BJ (cell line): ENCODE measurements at regions of chr19 and their contacts with region 1.

Region 1: DNA sequence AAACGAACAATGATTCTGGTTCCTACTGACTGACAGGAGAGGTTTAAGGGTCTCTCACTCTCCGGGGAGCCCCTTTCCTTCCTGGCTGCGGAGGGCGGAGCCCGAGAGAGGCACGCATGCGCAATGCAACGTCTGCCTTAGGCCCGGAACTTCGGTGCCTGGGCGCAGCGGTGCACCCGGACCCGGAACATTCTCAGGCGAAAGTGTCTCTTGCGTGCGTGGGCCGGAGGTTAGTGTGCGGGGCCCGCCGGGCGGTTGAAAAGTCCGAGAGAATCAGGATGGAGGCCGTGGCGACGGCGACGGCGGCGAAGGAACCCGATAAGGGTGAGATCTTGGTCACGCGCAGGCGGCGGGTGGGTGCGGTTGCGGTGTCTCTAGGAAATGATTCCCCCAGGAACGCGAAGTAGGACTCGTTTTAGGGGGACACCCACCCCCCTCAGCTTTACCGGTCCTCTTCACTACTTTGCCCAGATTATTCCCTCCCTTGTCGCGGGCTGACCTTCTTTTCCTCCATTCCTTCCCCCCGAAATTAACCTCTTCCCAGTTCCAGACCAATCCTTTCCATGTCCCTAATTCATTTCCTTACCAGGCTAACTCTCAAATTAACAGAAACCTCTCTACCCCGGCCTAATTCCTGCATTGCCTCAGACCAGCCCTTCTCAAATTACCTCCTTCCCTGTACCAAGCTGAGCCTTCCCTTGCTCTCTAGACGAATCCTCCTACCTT is at the start of gene CCDC97:
- DNase-seq: no peak
- H3K4me3 ChIP-seq: peak within 1 kb of the TSS; percentile 48
- H3K27me3 ChIP-seq: no peaks in the 10 kb centered on the region
- CTCF ChIP-seq: no peak
- polyA plus RNA-seq, gene CCDC97: 7.2 and 10.3 TPM in 2 replicates

Region 2: DNA sequence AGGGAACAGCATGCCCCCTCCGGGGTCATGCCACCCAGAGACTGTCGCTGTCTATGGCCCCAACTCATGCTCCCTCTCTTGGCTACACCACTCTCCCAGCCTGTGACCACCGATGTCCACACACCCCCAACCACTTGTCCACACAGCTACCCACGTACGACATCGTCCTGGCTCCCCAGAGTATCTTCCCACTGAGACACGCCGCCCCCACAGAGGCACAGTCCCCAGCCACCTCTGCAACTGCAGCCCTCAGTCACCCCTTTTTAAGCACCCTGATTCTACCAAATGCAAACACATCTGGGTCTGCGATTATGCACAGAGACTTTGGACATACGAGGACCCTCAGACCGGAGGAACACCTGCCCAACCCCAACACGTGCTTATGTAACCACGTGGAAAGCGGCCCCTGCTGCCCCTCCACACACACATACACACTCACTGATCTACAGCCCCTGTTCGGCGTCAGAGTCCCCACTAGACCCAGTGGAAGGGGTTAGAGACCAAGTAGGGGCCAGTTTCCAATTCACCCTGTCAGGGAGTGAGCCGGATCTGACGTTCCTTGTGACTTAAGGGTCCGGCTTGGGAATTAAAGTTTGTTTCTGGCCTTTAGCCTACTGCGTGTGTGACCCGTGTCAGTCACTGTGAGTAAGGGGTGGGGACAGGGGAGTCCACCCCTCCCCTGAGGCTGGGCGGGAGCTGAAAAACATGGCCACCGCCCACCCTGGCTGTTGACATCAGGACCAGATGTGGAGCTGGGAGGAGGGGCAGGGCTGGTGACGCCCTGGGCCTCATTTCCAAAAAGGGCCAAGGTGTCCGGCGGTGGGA is 103.1 kb before region 1 on chr19:
- CTCF ChIA-PET with region 1: interaction called, 45 read pairs
- POLR2A ChIA-PET with region 1: no interaction called
- DNase-seq: no peak
- H3K4me3 ChIP-seq: no peak overlapping the region
- H3K27me3 ChIP-seq: no peaks in the 10 kb centered on the region
- CTCF ChIP-seq: no peak

Region 3: GRCh38 chr19:41219924-41220567 is 90.2 kb before region 1 on chr19:
- CTCF ChIA-PET with region 1: interaction called, 10 read pairs
- POLR2A ChIA-PET with region 1: no interaction called
- DNase-seq: no peak
- H3K4me3 ChIP-seq: peak overlapping the region; percentile 83
- H3K27me3 ChIP-seq: no peaks in the 10 kb centered on the region
- CTCF ChIP-seq: no peak

Region 4: GRCh38 chr19:41263850-41264580 is 46.2 kb before region 1 on chr19 and contains the start of gene HNRNPUL1:
- CTCF ChIA-PET with region 1: interaction called, 44 read pairs
- POLR2A ChIA-PET with region 1: no interaction called
- DNase-seq: peak; percentile 100
- H3K4me3 ChIP-seq: peak within 1 kb of the TSS; percentile 91
- H3K27me3 ChIP-seq: no peaks in the 10 kb centered on the region
- CTCF ChIP-seq: peak; percentile 40; the same call in 1 of the 2 replicates
- polyA plus RNA-seq, gene HNRNPUL1: 35.4 and 37.9 TPM in 2 replicates

Region 5: DNA sequence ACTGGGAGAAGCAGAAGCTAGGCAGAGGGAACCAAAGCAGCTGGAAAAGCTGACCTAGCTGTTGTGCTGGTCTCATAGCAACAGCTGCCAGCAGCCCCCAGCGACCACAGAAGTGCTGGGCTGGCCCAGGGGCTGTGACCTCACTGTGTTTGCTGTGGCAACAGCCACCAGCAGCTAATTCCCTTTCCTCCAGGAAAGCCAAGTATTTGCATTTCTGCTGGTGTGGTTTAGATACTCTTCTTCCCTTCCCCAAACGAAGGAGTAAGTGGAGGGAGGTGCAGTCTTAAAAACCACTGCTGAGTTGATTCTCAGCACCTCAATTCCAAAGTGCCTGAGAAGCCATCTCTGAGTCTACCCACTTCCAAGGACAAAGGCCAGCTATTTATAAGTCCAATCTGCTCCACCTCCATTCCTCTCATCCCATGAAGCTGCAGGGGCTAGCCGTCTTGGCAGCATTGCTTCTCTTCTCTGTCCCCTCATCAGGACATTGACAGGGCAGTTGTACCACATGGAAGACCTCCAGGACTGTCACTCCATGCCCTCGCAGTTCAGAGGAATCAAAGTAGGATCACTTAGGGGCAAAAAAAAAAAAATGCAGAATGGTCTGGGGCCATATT is 11.7 kb before region 1 on chr19:
- CTCF ChIA-PET with region 1: interaction called, 83 read pairs
- POLR2A ChIA-PET with region 1: no interaction called
- DNase-seq: peak; percentile 69
- H3K4me3 ChIP-seq: no peak overlapping the region
- H3K27me3 ChIP-seq: no peaks in the 10 kb centered on the region
- CTCF ChIP-seq: no peak

Region 6: DNA sequence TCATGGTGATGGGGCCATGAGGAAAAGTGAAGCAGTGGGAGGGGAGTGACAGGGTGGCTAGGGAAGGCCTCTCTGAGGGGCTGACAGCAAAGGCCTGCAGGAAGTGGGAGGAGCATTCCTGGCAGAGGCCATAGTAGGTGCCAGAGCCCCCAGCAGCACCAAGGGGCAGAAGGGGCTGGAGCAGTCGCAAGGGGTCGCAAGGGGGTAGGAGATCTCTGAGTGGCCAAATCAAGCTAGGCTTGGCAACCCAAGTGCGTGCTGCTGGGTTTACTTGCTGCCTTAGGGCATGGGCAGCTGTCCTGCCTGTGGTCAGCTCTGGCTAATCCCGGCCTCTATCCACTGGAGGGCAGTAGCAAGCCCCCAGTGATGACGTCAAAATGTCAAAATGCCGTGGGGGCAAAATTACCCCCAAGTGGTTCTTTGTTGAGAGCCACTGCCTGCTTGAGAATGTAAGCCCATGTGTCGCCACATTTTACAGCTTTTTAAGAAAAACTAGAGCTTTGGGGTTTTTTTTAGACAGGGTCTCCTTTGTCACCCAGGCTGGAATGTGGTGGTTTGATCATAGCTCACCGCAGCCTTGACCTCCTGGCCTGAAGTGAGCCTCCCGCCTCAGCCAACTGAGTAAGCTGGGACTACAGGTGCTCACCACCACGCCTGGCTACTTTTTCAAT is 11.5 kb after region 1 on chr19:
- CTCF ChIA-PET with region 1: interaction called, 31 read pairs
- POLR2A ChIA-PET with region 1: no interaction called
- DNase-seq: no peak
- H3K4me3 ChIP-seq: no peak overlapping the region
- H3K27me3 ChIP-seq: no peaks in the 10 kb centered on the region
- CTCF ChIP-seq: peak; percentile 86

Region 7: GRCh38 chr19:41353466-41354342 is 43.5 kb after region 1 on chr19 and contains the start of gene TGFB1:
- CTCF ChIA-PET with region 1: interaction called, 24 read pairs
- POLR2A ChIA-PET with region 1: interaction called, 17 read pairs
- DNase-seq: peak; percentile 25
- H3K4me3 ChIP-seq: peak within 1 kb of the TSS; percentile 96
- H3K27me3 ChIP-seq: no peaks in the 10 kb centered on the region
- CTCF ChIP-seq: peak; percentile 96
- polyA plus RNA-seq, gene TGFB1: 7.3 and 11.2 TPM in 2 replicates